Pancreas (tissue), 10 donors: ENCODE measurements at regions of chr1 and their contacts with region 1.

Region 1: GRCh38 chr1:1246577-1247340 is at the start of gene C1QTNF12:
- DNase-seq: peak in 2 of 6 donors; percentile 58 to 73
- ATAC-seq: peak in 1 of 4 donors; percentile 17
- H3K4me3 ChIP-seq: no peak within 1 kb of the TSS
- H3K27ac ChIP-seq: no peak within 1 kb of the TSS
- H3K4me1 ChIP-seq: no peaks in the 10 kb centered on the region
- H3K27me3 ChIP-seq: no peaks in the 10 kb centered on the region
- CTCF ChIP-seq: no peak
- total RNA-seq, gene C1QTNF12: 0.43 to 1.7 (median 0.93) TPM

Region 2: GRCh38 chr1:818618-819291 is 428.0 kb before region 1 on chr1:
- intact Hi-C with region 1: no loop called
- DNase-seq: no peak
- ATAC-seq: no peak
- H3K4me3 ChIP-seq: no peak overlapping the region
- H3K27ac ChIP-seq: no peak overlapping the region
- H3K4me1 ChIP-seq: peaks cover 0 to 5% (median 0%) of the 10 kb centered on the region in 3 donors
- H3K27me3 ChIP-seq: no peaks in the 10 kb centered on the region
- CTCF ChIP-seq: no peak

Region 3: GRCh38 chr1:1122078-1122811 is 124.5 kb before region 1 on chr1:
- intact Hi-C with region 1: loop called in 1 of 3 experiments (anchors 10 kb)
- DNase-seq: peak; percentile 74 to 96 (median 87)
- ATAC-seq: peak; percentile 89 to 94 (median 93)
- H3K4me3 ChIP-seq: peak overlapping the region in 1 of 4 donors; percentile 13
- H3K27ac ChIP-seq: no peak overlapping the region
- H3K4me1 ChIP-seq: peaks cover 10 to 12% (median 11%) of the 10 kb centered on the region in 3 donors
- H3K27me3 ChIP-seq: no peaks in the 10 kb centered on the region
- CTCF ChIP-seq: peak; percentile 82 to 88 (median 86)

Region 4: GRCh38 chr1:1212780-1213344 is 33.9 kb before region 1 on chr1:
- intact Hi-C with region 1: no loop called
- DNase-seq: peak in 3 of 6 donors; percentile 37 to 80 (median 59)
- ATAC-seq: peak in 1 of 4 donors; percentile 15
- H3K4me3 ChIP-seq: peak overlapping the region in 1 of 4 donors; percentile 13
- H3K27ac ChIP-seq: no peak overlapping the region
- H3K4me1 ChIP-seq: no peaks in the 10 kb centered on the region
- H3K27me3 ChIP-seq: no peaks in the 10 kb centered on the region
- CTCF ChIP-seq: no peak